ENCODE measurements at regions of chr2 and their contacts with region 1.

Region 1: DNA sequence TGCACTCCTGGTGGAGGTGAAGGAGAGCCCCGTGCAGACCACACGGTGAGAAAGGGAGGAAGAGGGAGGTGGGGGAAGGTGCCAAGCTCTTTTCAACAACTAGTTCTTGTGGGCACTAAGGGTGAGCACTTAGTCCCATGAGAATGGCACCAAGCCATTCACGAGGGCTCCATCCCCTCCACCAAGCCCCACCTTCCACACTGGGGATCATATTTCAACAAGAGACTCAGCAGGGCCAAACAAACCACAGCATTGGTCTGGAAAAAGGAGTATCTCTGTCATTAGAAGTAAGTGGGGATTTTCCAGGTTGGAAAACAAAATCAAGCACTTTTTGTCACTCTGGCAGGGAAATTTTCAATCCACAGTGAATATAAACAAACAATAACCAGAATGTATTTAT is 38.4 kb downstream of the ZAP70 start:
- DNase-seq: no peak
- H3K4me3 Mint-ChIP-seq: no peak overlapping the region
- H3K27ac Mint-ChIP-seq: no peak overlapping the region
- H3K4me1 Mint-ChIP-seq: peaks cover 11% of the 10 kb centered on the region
- H3K27me3 Mint-ChIP-seq: no peaks in the 10 kb centered on the region

Region 2: GRCh38 chr2:97710596-97711386 is 41.0 kb before region 1 on chr2:
- CTCF ChIA-PET with region 1: interaction called, 18 read pairs
- DNase-seq: peak; percentile 25
- H3K4me3 Mint-ChIP-seq: no peak overlapping the region
- H3K27ac Mint-ChIP-seq: no peak overlapping the region
- H3K4me1 Mint-ChIP-seq: peaks cover 52% of the 10 kb centered on the region
- H3K27me3 Mint-ChIP-seq: peaks cover 13% of the 10 kb centered on the region

Region 3: GRCh38 chr2:97718051-97718882 is 33.5 kb before region 1 on chr2:
- CTCF ChIA-PET with region 1: interaction called, 13 read pairs
- DNase-seq: peak; percentile 86
- H3K4me3 Mint-ChIP-seq: peak overlapping the region; percentile 85
- H3K27ac Mint-ChIP-seq: peak overlapping the region; percentile 96
- H3K4me1 Mint-ChIP-seq: peaks cover 78% of the 10 kb centered on the region
- H3K27me3 Mint-ChIP-seq: no peaks in the 10 kb centered on the region

Region 4: GRCh38 chr2:97740590-97741182 is 11.1 kb before region 1 on chr2:
- CTCF ChIA-PET with region 1: interaction called, 10 read pairs
- DNase-seq: peak; percentile 46
- H3K4me3 Mint-ChIP-seq: peak overlapping the region; percentile 17
- H3K27ac Mint-ChIP-seq: peak overlapping the region; percentile 93
- H3K4me1 Mint-ChIP-seq: peaks cover 57% of the 10 kb centered on the region
- H3K27me3 Mint-ChIP-seq: no peaks in the 10 kb centered on the region

Region 5: GRCh38 chr2:97812931-97813330 is 61.2 kb after region 1 on chr2:
- CTCF ChIA-PET with region 1: no interaction called
- DNase-seq: no peak
- H3K4me3 Mint-ChIP-seq: no peak overlapping the region
- H3K27ac Mint-ChIP-seq: no peak overlapping the region
- H3K4me1 Mint-ChIP-seq: no peaks in the 10 kb centered on the region
- H3K27me3 Mint-ChIP-seq: no peaks in the 10 kb centered on the region

Measured in activated naive CD4-positive, alpha-beta T cell treated with anti-CD3 and anti-CD28 coated beads, Interleukin-2, amount 10 ng/mL, durations not matched to agents 7 days and 5 days (primary cell).